SK-N-SH (cell line): ENCODE measurements at regions of chr9 and their contacts with region 1.

Region 1: DNA sequence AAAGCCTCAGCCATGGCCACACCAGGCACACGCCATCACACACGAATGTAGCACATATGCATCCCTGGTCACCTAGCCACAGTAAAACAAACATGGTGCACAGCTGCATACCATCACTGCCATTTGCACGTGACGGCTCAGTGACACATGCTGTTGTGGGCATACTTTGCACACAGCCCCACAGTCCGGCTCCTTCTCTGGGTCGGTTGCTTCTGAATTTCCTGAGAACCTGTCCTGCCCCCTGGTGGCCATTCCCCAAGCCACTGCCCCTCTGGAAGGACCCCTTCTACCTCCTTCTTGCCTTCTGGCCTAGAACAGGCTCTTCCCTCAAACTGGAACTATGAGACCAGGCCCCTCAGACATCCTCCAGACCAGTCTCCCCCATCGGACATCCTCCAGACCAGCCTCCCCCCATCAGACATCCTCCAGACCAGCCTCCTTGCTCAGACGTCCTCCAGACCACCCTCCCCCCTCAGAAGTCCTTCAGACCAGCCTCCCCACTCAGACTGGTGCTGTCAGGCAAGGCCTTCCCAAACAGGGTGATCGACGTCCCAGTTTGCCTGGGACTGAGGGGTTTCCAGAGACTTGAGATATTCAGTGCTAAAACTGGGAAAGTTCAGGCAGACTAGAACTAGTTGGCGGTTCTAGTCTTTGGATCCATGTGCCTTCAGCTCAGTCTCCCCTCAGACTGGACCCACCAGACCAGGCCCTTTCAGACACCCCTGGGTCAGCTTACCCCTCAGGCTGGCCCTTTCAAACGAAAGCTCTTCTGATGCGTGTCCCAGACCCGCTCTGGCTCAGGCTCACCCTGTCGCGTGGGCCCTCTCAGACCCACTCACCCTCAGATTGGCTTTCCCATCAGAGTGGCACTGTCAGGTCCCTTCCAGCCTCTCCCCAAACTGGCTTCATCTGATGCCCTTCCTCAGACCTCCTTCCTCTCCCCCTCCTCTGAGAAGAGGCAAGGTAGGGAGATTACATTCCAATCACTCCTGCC is 24.3 kb upstream of the ENHO start:
- DNase-seq: peak; percentile 65
- H3K4me3 ChIP-seq: peak overlapping the region in 1 of 2 experiments; percentile 40; a peak in 1 of 4 replicates
- H3K27ac ChIP-seq: peak overlapping the region in 1 of 2 experiments; percentile 74; a peak in 2 of 4 replicates
- H3K4me1 ChIP-seq: peaks cover 0 to 37% of the 10 kb centered on the region in 2 experiments; a peak in 1 of 4 replicates
- H3K27me3 ChIP-seq: peaks cover 5% of the 10 kb centered on the region; the same call in 1 of the 2 replicates
- CTCF ChIP-seq: peak; percentile 79
- EP300 ChIP-seq: no peak
- RAD21 ChIP-seq: peak; percentile 67

Region 2: GRCh38 chr9:34413231-34413852 is 133.8 kb before region 1 on chr9:
- CTCF ChIA-PET with region 1: interaction called, 19 read pairs
- POLR2A ChIA-PET with region 1: no interaction called
- DNase-seq: no peak
- H3K4me3 ChIP-seq: no peak overlapping the region
- H3K27ac ChIP-seq: no peak overlapping the region
- H3K4me1 ChIP-seq: peaks cover 0 to 12% of the 10 kb centered on the region in 2 experiments; a peak in 1 of 4 replicates
- H3K27me3 ChIP-seq: no peaks in the 10 kb centered on the region
- CTCF ChIP-seq: no peak
- EP300 ChIP-seq: no peak
- RAD21 ChIP-seq: no peak

Region 3: GRCh38 chr9:34446468-34446891 is 100.7 kb before region 1 on chr9:
- CTCF ChIA-PET with region 1: interaction called, 18 read pairs
- POLR2A ChIA-PET with region 1: no interaction called
- DNase-seq: no peak
- H3K4me3 ChIP-seq: no peak overlapping the region
- H3K27ac ChIP-seq: no peak overlapping the region
- H3K4me1 ChIP-seq: peaks cover 9 to 15% of the 10 kb centered on the region in 2 experiments; a peak in 2 of 4 replicates
- H3K27me3 ChIP-seq: no peaks in the 10 kb centered on the region
- CTCF ChIP-seq: no peak
- EP300 ChIP-seq: no peak
- RAD21 ChIP-seq: no peak

Region 4: DNA sequence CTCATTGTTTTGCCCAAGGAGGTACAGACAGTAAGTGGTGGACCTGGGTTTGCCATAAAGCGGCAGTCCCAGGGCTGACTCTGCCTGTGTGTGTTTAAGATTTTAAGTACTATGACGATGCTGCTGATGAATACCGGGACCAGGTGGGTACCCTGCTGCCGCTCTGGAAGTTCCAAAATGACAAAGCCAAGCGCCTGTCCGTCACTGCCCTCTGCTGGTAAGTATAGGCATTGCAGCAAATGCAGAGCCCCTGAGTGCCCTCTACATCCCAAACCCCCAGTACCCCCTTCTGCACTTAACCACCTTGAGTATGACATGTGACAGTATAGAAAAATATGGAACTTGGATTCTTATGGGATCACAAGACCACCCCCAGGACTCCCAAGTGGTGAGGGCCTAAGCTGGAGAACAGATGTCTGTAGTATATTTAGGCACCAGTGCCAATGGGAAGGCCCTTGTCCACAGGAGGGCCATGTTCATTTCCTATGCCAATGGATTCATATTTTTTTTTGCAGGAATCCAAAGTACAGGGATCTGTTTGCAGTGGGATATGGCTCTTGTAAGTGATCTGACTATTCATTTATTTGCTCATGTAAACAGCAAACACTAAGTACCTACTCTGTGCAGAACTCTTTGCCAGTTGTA is 46.4 kb before region 1 on chr9:
- CTCF ChIA-PET with region 1: interaction called, 46 read pairs
- POLR2A ChIA-PET with region 1: no interaction called
- DNase-seq: peak; percentile 79
- H3K4me3 ChIP-seq: no peak overlapping the region
- H3K27ac ChIP-seq: no peak overlapping the region
- H3K4me1 ChIP-seq: peaks cover 0 to 6% of the 10 kb centered on the region in 2 experiments; a peak in 1 of 4 replicates
- H3K27me3 ChIP-seq: no peaks in the 10 kb centered on the region
- CTCF ChIP-seq: peak; percentile 97
- EP300 ChIP-seq: no peak
- RAD21 ChIP-seq: peak; percentile 93

Region 5: GRCh38 chr9:34559624-34560452 is 12.7 kb after region 1 on chr9:
- CTCF ChIA-PET with region 1: interaction called, 83 read pairs
- POLR2A ChIA-PET with region 1: no interaction called
- DNase-seq: peak; percentile 79
- H3K4me3 ChIP-seq: no peak overlapping the region
- H3K27ac ChIP-seq: peak overlapping the region in 1 of 2 experiments; percentile 74; a peak in 2 of 4 replicates
- H3K4me1 ChIP-seq: peaks cover 0 to 73% of the 10 kb centered on the region in 2 experiments; a peak in 2 of 4 replicates
- H3K27me3 ChIP-seq: no peaks in the 10 kb centered on the region
- CTCF ChIP-seq: no peak
- EP300 ChIP-seq: no peak
- RAD21 ChIP-seq: no peak

Region 6: DNA sequence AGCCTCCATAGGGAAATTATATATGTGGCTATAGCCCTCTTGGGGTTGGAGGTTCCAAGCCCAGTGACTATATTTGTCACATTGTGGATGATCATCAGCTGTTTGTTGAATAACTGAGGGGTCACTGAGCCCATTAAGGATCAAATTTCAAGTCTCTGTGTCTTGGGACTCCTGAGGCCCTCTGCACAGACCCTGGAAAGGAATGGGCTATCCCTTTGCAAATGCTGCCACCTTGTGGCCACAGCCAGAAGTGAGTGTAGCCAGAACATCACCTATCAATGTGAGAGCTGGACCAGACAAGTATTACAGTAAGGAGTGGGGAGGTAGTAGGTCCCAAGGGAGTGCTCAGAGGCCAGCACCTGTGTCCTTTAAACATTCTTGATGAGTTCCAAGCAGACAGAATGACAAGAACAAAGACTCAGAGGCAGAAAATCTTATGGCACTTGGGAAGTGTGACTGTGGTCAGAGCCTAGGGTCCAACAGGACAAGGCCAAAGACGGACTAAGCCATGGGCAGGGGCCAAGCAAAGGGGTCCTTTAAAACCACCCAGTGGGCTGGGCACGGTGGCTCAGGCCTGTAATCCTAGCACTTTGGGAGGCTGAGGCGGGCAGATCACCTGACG is 56.6 kb after region 1 on chr9:
- CTCF ChIA-PET with region 1: interaction called, 88 read pairs
- POLR2A ChIA-PET with region 1: no interaction called
- DNase-seq: peak; percentile 88
- H3K4me3 ChIP-seq: no peak overlapping the region; a peak in 1 of 4 replicates
- H3K27ac ChIP-seq: no peak overlapping the region
- H3K4me1 ChIP-seq: peaks cover 0 to 7% of the 10 kb centered on the region in 2 experiments; a peak in 1 of 4 replicates
- H3K27me3 ChIP-seq: no peaks in the 10 kb centered on the region
- CTCF ChIP-seq: peak; percentile 94
- EP300 ChIP-seq: no peak
- RAD21 ChIP-seq: peak; percentile 97

Region 7: GRCh38 chr9:34637356-34638137 is 90.4 kb after region 1 on chr9 and contains the start of gene SIGMAR1:
- CTCF ChIA-PET with region 1: interaction called, 26 read pairs
- POLR2A ChIA-PET with region 1: no interaction called
- DNase-seq: peak; percentile 98
- H3K4me3 ChIP-seq: peak within 1 kb of the TSS; percentile 66 to 69
- H3K27ac ChIP-seq: peak within 1 kb of the TSS; percentile 32 to 72; a peak in 3 of 4 replicates
- H3K4me1 ChIP-seq: peaks cover 4 to 20% of the 10 kb centered on the region in 2 experiments; a peak in 1 of 4 replicates
- H3K27me3 ChIP-seq: no peaks in the 10 kb centered on the region
- CTCF ChIP-seq: no peak
- EP300 ChIP-seq: no peak; a peak in 1 of 4 replicates
- RAD21 ChIP-seq: no peak
- polyA plus RNA-seq, gene SIGMAR1: 73.7 and 79.0 TPM in 2 replicates